CD4-positive, alpha-beta memory T cell (primary cell): ENCODE measurements at regions of chr1 and their contacts with region 1.

Region 1: DNA sequence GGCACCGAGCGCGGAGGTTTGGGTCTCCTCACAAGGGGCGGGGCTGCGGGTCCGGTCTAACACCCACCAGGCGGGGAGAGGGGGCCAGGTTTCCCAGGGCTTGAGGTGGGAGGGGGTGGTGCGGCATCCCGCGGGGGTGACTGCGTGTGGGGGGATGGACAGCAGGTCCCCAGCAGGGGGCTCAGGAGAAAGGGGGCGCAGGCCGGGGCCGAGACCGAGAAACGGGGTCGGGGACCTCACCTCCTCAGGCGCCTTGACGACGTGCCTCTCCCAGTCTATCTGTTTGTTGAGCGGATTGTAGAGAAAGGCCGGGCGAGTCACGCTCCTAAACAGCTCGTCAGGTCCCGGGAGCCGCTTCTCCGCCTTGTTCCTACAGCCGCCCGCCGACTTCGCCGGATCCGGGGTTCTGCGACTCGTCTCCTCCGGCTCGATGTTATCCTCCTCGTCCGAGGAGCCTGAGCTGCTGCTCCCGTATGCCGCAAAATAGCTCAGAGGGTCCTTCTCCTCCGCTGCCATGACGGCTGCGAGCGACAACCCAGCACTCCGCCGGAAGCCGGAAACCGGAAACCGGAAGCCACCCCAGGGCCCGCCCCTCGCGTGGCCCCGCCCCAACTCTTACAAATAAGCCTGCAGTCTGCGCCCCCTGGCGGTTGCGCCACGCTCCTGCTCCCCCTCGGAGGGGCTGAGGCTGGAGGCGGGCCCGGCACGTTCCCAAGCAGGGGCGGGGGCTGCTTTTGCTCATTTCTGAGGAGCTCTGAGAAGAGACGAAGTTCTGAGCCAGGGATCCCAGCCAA is at the start of gene C1orf52:
- DNase-seq: peak; percentile 93 to 96 (median 95)
- H3K4me3 ChIP-seq: peak within 1 kb of the TSS; percentile 85 to 95
- H3K4me3 Mint-ChIP-seq: peak within 1 kb of the TSS; percentile 98 to 99 (median 98)
- H3K27ac ChIP-seq: peak within 1 kb of the TSS; percentile 80
- H3K27ac Mint-ChIP-seq: peak within 1 kb of the TSS; percentile 94 to 98 (median 97)
- H3K4me1 ChIP-seq: peaks cover 35% of the 10 kb centered on the region
- H3K4me1 Mint-ChIP-seq: peaks cover 27 to 56% (median 41%) of the 10 kb centered on the region in 4 donors
- H3K27me3 ChIP-seq: no peaks in the 10 kb centered on the region
- H3K27me3 Mint-ChIP-seq: no peaks in the 10 kb centered on the region
- total RNA-seq, gene C1orf52: 39.6 to 41.6 TPM

Region 2: DNA sequence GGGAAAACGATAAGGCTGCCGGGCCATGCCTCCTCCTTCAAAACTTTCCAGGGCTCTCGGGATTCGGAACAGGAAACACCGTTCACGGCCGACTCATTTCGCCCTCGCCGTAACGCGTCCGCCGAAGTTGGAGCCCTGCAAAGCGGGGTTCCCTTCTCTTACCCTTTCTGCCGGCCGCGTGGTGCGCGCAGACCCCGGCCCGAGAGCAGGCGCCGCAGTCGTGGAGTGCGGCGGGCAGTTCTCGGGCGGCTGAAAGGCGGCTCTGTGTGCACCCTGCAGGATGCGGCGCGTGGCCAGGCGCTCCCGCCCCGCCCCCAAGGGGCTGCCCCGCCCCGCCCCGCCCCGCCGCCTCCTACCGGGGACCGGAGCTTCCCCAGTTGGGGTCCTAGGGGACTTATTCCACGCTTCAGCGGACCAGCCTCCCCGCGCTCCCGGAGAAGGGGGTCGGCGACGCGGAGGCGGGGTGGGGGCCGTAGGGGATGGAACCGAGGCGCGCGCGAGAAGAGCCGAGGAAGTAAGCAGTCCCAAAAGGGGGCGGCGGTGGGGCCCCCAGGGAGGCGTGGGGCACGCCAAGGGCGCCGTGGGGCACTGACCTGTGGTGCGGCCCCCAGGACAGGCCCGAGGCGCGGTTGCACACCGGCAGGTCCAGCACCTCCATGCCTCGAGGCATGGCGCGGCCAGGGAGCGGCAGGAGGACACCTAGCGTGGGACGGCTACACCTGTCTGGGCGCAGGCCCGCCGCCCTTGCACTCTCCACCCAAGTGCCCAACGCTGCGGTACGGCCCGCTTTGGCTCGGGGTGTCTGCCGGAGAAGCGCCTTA is 262.3 kb before region 1 on chr1 and contains the start of gene MCOLN2:
- CTCF ChIA-PET with region 1: interaction called, 8 read pairs
- POLR2A ChIA-PET with region 1: no interaction called
- intact Hi-C with region 1: loop called (anchors 2 kb)
- DNase-seq: peak; percentile 42 to 58 (median 52)
- H3K4me3 ChIP-seq: peak within 1 kb of the TSS; percentile 82 to 86
- H3K4me3 Mint-ChIP-seq: peak within 1 kb of the TSS; percentile 81 to 98 (median 89)
- H3K27ac ChIP-seq: peak within 1 kb of the TSS; percentile 50
- H3K27ac Mint-ChIP-seq: peak within 1 kb of the TSS; percentile 51 to 88 (median 76)
- H3K4me1 ChIP-seq: peaks cover 56% of the 10 kb centered on the region
- H3K4me1 Mint-ChIP-seq: peaks cover 30 to 67% (median 39%) of the 10 kb centered on the region in 4 donors
- H3K27me3 ChIP-seq: peaks cover 4% of the 10 kb centered on the region
- H3K27me3 Mint-ChIP-seq: peaks cover 3 to 17% of the 10 kb centered on the region in 2 donors
- total RNA-seq, gene MCOLN2: 16.8 to 20.3 TPM

Region 3: DNA sequence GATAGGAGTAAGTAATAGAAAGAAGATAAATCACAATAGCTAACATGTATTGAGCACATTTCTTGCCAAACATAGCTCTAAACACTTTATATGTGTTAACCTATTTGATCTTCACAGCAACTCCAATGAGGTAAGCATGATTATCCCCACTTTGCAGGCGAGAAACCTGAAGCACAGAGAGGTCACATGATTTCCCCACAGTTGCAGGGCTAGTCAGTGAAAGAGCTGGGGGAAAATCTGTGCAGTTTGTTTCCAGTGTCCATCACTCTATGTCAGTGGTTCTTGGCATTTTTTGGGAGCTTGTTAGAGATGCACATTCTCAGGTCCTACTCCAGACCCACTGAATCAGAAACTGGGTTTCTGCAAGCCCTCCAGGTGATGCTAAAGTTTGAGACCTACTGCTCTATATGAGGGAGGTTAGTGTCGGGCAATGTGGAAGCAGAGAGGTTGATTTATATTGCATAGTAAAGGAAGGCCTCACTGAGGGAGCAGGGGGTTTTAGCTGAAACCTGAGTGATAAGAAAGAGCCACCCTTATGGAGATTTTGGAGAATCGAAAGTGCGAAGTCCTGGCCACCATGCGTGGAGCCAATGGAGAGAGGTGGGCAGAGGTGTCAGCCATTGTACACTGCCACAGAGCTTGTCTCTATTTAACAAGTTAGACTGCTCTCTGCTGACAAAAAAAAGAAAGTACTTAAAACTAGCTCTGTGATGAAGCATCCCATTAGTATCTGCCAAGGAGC is 231.9 kb before region 1 on chr1:
- CTCF ChIA-PET with region 1: interaction called, 8 read pairs
- POLR2A ChIA-PET with region 1: interaction called, 3 read pairs
- intact Hi-C with region 1: loop called (anchors 2 kb)
- DNase-seq: peak in 4 of 5 donors; percentile 38 to 47 (median 42)
- H3K4me3 ChIP-seq: no peak overlapping the region
- H3K4me3 Mint-ChIP-seq: peak overlapping the region; percentile 63 to 80 (median 74)
- H3K27ac ChIP-seq: peak overlapping the region; percentile 16
- H3K27ac Mint-ChIP-seq: peak overlapping the region; percentile 60 to 88 (median 79)
- H3K4me1 ChIP-seq: peaks cover 13% of the 10 kb centered on the region
- H3K4me1 Mint-ChIP-seq: peaks cover 6 to 11% (median 8%) of the 10 kb centered on the region in 4 donors
- H3K27me3 ChIP-seq: no peaks in the 10 kb centered on the region
- H3K27me3 Mint-ChIP-seq: no peaks in the 10 kb centered on the region

Region 4: DNA sequence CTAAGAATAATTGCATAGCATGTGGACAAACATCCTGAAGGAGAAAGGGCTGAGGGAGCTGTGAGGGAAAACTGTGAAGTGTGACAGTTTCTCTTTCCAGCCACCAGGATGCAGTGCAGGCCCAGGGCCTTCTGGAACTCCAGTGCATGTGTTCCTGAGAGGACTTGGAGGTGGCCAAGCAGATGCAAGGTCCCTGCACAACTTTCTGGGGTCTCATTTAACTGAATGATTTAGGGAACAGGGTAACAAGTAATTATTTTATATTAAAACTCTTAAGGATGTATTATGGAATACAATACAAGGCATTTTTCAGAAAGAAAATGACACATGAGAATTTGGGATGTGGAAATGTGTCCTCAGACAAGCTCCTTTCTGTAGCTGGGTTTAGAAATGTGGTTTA is 149.8 kb before region 1 on chr1:
- CTCF ChIA-PET with region 1: interaction called, 64 read pairs
- POLR2A ChIA-PET with region 1: interaction called, 3 read pairs
- intact Hi-C with region 1: loop called (anchors 1 kb)
- DNase-seq: peak in 4 of 5 donors; percentile 33 to 44 (median 41)
- H3K4me3 ChIP-seq: no peak overlapping the region
- H3K4me3 Mint-ChIP-seq: no peak overlapping the region
- H3K27ac ChIP-seq: no peak overlapping the region
- H3K27ac Mint-ChIP-seq: peak overlapping the region in 1 of 7 donors; percentile 59
- H3K4me1 ChIP-seq: no peaks in the 10 kb centered on the region
- H3K4me1 Mint-ChIP-seq: no peaks in the 10 kb centered on the region
- H3K27me3 ChIP-seq: no peaks in the 10 kb centered on the region
- H3K27me3 Mint-ChIP-seq: peaks cover 0 to 2% of the 10 kb centered on the region in 2 donors

Region 5: DNA sequence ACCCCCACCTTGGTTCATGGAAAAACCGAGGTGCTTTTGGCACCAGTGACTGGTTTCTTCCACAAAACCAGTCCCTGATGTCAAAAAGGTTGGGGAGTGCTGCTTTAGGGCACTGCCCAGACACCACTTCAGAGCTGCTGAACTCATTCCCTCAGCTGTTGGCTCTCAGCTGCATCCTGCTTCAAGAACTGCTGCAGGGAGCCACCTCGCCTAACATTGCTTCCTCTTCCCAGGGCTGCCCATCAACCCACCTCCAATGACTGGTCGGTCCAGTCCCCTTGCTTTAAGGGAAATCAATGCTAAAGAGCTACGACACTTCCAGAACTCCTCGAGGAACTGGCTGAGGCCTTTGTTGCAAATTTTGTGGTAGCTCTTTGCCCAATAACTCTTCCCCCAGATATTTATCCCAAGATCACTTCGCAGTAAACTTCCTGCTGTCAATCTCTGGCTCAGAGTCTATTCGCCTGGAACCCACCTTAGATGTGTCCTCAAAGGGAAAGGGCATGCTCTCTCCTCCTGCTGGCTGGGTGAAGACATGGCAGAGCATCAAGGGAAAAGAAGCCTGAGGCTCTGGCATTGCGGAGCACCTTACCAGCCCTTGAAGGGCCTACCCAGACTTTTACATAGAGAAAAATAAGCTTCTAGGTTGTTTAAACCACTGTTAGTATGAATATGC is 28.9 kb before region 1 on chr1:
- CTCF ChIA-PET with region 1: interaction called, 12 read pairs
- POLR2A ChIA-PET with region 1: no interaction called
- intact Hi-C with region 1: no loop called
- DNase-seq: peak in 1 of 5 donors; percentile 8
- H3K4me3 ChIP-seq: no peak overlapping the region
- H3K4me3 Mint-ChIP-seq: no peak overlapping the region
- H3K27ac ChIP-seq: no peak overlapping the region
- H3K27ac Mint-ChIP-seq: peak overlapping the region in 1 of 7 donors; percentile 19
- H3K4me1 ChIP-seq: no peaks in the 10 kb centered on the region
- H3K4me1 Mint-ChIP-seq: no peaks in the 10 kb centered on the region
- H3K27me3 ChIP-seq: no peaks in the 10 kb centered on the region
- H3K27me3 Mint-ChIP-seq: peaks cover 0 to 5% of the 10 kb centered on the region in 2 donors

Region 6: DNA sequence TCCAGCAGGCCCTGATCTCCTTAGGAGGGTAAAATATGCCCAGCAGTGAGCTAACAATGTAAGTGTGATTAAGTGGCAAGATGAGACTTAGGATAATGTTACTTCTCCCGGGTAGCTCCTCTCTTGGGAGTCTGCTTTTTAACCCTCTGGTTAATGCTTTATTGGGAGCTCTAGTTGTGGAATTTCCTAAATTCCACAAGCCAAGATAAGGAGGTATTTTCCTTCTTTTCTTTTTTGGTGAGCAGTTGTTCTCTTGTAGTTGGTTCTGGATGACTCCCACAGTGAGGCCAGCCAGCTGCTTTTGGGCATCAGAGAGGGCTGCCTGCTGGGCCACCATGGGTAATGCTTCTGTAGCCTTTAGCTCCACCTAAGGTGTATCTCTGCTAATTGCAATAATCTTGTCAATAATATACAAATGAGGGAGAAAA is 19.1 kb before region 1 on chr1:
- CTCF ChIA-PET with region 1: interaction called, 11 read pairs
- POLR2A ChIA-PET with region 1: interaction called, 3 read pairs
- intact Hi-C with region 1: no loop called
- DNase-seq: peak in 3 of 5 donors; percentile 11 to 17 (median 12)
- H3K4me3 ChIP-seq: no peak overlapping the region
- H3K4me3 Mint-ChIP-seq: peak overlapping the region in 1 of 8 donors; percentile 9
- H3K27ac ChIP-seq: no peak overlapping the region
- H3K27ac Mint-ChIP-seq: peak overlapping the region in 3 of 7 donors; percentile 37 to 78 (median 50)
- H3K4me1 ChIP-seq: peaks cover 8% of the 10 kb centered on the region
- H3K4me1 Mint-ChIP-seq: peaks cover 6 to 12% (median 10%) of the 10 kb centered on the region in 4 donors
- H3K27me3 ChIP-seq: no peaks in the 10 kb centered on the region
- H3K27me3 Mint-ChIP-seq: peaks cover 2 to 4% of the 10 kb centered on the region in 2 donors

Region 7: GRCh38 chr1:85283475-85284199 is 24.3 kb after region 1 on chr1:
- CTCF ChIA-PET with region 1: interaction called, 218 read pairs
- POLR2A ChIA-PET with region 1: no interaction called
- intact Hi-C with region 1: no loop called
- DNase-seq: no peak
- H3K4me3 ChIP-seq: no peak overlapping the region
- H3K4me3 Mint-ChIP-seq: no peak overlapping the region
- H3K27ac ChIP-seq: no peak overlapping the region
- H3K27ac Mint-ChIP-seq: no peak overlapping the region
- H3K4me1 ChIP-seq: peaks cover 7% of the 10 kb centered on the region
- H3K4me1 Mint-ChIP-seq: peaks cover 6 to 12% (median 9%) of the 10 kb centered on the region in 4 donors
- H3K27me3 ChIP-seq: no peaks in the 10 kb centered on the region
- H3K27me3 Mint-ChIP-seq: no peaks in the 10 kb centered on the region